H1 (cell line): ENCODE measurements at regions of chr1 and their contacts with region 1.

Region 1: DNA sequence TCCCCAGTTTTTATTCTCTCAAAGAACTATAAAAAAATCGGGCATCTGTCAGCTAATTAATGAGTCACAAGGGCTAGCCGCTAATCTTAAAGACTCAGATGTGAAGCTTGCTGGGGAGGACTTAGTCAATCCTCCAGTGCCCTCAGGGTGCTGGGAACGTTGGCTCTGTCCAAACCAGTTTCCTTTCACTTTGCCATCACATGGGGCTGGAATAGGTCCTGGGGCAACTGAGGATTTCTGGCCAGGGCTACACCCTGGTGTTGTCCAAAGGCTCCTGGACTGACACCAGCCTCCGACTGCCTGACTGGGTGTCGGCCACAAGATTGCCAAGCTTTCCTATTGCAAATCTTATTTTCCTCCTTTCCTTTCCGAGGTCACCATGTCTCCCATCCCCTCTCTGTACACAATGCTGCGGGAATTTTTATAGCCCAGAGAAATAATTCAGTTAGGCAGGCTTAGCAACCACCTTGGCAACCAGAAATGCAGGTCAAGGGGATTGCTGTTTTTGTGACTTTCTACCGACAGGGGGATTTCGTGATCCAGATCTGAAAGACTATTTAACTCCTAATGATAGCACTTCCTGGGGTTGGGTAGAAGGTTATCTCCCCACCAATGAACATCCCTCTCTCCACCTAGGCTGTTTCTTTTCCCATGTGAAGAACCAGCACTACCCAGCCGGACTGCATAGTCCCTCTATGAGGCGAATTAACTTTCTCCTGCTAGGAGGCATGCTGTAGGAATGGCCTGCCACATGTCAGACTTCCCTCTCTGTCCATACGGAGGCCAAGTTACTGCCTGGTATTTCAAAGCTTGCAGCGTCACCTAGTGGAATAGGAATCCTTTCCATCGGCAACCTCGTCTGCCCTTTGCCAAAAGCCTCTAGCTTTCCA is 29.9 kb upstream of the CTBS start:
- DNase-seq: peak; percentile 49 to 60
- H3K4me3 ChIP-seq: no peak overlapping the region
- H3K27ac ChIP-seq: no peak overlapping the region
- H3K4me1 ChIP-seq: no peaks in the 10 kb centered on the region
- H3K27me3 ChIP-seq: no peaks in the 10 kb centered on the region
- CTCF ChIP-seq: peak; percentile 60 to 91 (median 87)
- EP300 ChIP-seq: no peak
- POLR2A ChIP-seq: no peak
- RAD21 ChIP-seq: peak; percentile 94 to 97

Region 2: DNA sequence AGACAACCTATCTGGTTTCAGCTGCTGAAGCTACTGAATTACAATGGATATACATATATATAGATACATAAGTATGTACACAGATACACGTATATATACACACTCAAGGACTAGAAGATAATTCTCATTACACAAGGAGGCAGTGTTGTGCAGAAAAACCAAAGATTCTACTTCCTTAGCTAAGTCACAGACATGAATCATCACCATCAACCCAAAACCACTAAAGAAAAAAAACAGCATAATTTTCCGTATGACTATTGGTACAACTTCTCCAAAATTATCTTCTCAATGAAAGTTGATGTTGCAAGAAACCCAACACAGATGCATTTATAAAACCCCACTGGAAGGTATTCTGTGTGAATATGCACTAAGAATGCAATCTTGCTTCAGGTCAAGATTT is 161.9 kb before region 1 on chr1:
- CTCF ChIA-PET with region 1: interaction called, 10 read pairs
- POLR2A ChIA-PET with region 1: no interaction called
- DNase-seq: no peak
- H3K4me3 ChIP-seq: no peak overlapping the region
- H3K27ac ChIP-seq: no peak overlapping the region
- H3K4me1 ChIP-seq: no peaks in the 10 kb centered on the region
- H3K27me3 ChIP-seq: no peaks in the 10 kb centered on the region
- CTCF ChIP-seq: peak in 1 of 3 experiments; percentile 11; a peak in 1 of 4 replicates
- EP300 ChIP-seq: no peak
- POLR2A ChIP-seq: no peak
- RAD21 ChIP-seq: peak; percentile 40 to 48

Region 3: GRCh38 chr1:84582802-84583587 is 21.2 kb before region 1 on chr1:
- CTCF ChIA-PET with region 1: interaction called, 13 read pairs
- POLR2A ChIA-PET with region 1: interaction called, 3 read pairs
- DNase-seq: no peak
- H3K4me3 ChIP-seq: peak overlapping the region in 1 of 4 experiments; percentile 20; a peak in 1 of 8 replicates
- H3K27ac ChIP-seq: no peak overlapping the region
- H3K4me1 ChIP-seq: peaks cover 3 to 13% (median 8%) of the 10 kb centered on the region in 4 experiments
- H3K27me3 ChIP-seq: no peaks in the 10 kb centered on the region
- CTCF ChIP-seq: no peak
- EP300 ChIP-seq: no peak
- POLR2A ChIP-seq: no peak
- RAD21 ChIP-seq: no peak